ENCODE measurements at regions of chr9 and their contacts with region 1.

Region 1: GRCh38 chr9:269081-269711 is 54.5 kb downstream of the DOCK8 start:
- DNase-seq: no peak
- H3K4me3 ChIP-seq: no peak overlapping the region
- H3K27ac ChIP-seq: no peak overlapping the region
- H3K4me1 ChIP-seq: no peaks in the 10 kb centered on the region
- H3K27me3 ChIP-seq: no peaks in the 10 kb centered on the region
- CTCF ChIP-seq: no peak
- EP300 ChIP-seq: no peak
- POLR2A ChIP-seq: no peak

Region 2: DNA sequence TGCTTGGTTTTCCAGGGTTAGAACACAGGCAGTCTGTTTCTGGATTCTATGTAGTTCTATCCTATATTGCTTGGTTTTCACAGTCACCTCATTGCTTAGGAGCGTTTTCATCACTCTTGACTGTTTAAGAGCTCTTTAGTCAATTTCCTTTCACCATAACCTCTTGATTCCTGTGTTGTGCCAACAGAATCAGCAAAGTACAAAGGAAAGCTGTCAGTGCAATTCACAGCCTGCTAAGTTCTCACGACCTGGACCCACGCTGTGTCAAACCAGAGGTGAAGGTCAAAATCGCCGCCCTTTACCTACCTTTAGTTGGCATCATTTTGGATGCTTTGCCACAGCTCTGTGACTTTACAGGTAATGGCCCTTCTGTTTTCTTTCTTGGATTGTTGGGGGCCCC is 145.4 kb after region 1 on chr9:
- intact Hi-C with region 1: loop called in 1 of 4 experiments (anchors 5 kb)
- DNase-seq: no peak
- H3K4me3 ChIP-seq: no peak overlapping the region
- H3K27ac ChIP-seq: no peak overlapping the region
- H3K4me1 ChIP-seq: no peaks in the 10 kb centered on the region
- H3K27me3 ChIP-seq: no peaks in the 10 kb centered on the region
- CTCF ChIP-seq: no peak
- EP300 ChIP-seq: no peak
- POLR2A ChIP-seq: no peak

Region 3: GRCh38 chr9:530681-531080 is 261.5 kb after region 1 on chr9:
- intact Hi-C with region 1: no loop called
- DNase-seq: no peak
- H3K4me3 ChIP-seq: no peak overlapping the region
- H3K27ac ChIP-seq: no peak overlapping the region
- H3K4me1 ChIP-seq: peaks cover 6% of the 10 kb centered on the region
- H3K27me3 ChIP-seq: no peaks in the 10 kb centered on the region
- CTCF ChIP-seq: no peak
- EP300 ChIP-seq: no peak
- POLR2A ChIP-seq: no peak

Region 4: DNA sequence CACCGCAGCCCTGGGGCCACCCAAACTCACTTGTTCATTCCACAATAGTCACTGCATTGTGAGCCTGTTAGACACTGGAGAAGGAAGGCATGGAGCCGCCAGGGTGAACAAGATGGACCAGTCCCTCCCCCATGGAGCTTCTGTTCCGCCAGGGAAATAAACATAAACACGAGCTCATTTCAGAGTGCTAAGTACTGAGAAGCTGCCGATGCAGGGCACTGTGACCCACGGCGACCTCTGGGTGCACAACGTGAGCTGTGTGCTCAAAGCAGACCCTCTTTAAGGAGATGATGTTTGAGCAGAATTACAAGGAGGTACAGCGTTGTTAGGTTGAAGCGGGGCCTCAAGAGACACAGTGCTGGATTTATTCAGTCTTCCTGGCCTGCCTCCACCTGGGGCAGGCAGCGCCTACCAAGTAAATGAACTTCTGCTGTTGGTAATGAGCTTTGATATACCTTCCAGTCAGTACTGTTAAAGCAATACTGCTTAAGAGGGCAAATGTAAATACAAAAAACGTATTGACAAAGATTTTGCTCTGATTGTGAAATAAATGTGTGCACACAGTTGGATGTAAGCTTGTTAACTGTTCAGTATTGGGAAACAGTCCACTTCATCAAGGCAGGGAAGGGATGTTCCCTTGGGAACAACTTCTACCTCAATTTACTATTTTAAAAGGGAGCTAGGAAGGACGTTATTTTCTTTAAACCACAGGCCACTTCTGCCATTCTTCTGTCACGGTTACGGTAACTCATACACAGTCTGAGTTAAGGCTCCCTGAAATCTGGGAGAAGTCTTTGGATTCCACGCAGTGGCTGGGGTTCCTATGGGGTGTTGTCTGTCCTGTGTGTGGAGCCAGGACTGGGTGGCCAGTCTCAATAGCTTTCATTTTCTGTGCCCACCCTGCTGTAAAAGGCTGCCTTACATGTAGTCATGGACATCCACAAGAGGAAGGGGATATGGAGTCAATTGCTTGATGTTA is 523.4 kb after region 1 on chr9:
- intact Hi-C with region 1: no loop called
- DNase-seq: no peak
- H3K4me3 ChIP-seq: no peak overlapping the region
- H3K27ac ChIP-seq: no peak overlapping the region
- H3K4me1 ChIP-seq: no peaks in the 10 kb centered on the region
- H3K27me3 ChIP-seq: no peaks in the 10 kb centered on the region
- CTCF ChIP-seq: no peak
- EP300 ChIP-seq: no peak
- POLR2A ChIP-seq: no peak

Measured in ovary (tissue), 10 donors.